K562 (cell line): ENCODE measurements at regions of chr3 and their contacts with region 1.

Region 1: DNA sequence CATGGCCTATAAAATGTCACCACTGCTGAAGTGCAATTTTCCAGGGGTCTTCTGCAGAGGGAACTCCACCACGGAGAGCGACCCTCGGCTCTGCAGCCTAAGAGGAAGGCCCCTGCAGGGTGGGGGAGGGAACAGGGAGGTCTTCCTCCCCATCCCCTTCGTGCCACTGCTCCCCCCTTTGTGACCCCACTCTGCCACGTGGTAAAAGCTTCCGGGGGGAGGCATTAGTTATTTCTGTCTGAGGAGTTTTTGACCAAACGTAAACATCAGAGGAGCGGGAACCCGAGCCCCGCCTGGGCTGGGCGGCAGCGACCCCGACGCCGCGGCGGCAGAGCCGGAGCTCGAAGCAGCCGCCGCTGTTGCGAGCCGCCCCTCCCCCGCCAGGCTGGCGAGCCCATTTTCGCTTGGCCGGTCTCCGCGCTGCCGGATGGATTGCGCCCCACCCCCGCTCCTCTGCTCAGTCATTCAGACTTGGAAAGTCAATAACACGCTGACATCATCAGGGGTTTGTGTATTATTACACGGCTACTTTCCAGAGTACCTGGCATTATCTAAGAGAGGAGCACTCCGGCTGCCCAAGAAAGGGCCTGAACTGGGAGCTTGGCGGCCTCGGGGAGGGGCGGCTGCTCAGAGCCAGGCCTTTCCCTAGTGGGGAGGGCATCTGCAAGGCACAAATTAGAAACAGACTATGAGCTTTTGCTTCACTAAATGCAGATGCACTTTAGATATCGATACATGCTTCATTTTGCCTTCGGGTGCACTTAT is 162.5 kb upstream of the TBL1XR1 start:
- DNase-seq: peak; percentile 88 to 98 (median 90)
- ATAC-seq: peak; percentile 80
- H3K4me3 ChIP-seq: peak overlapping the region; percentile 7; the same call in 1 of the 2 replicates
- H3K27ac ChIP-seq: peak overlapping the region; percentile 98
- H3K4me1 ChIP-seq: peaks cover 32 to 56% of the 10 kb centered on the region in 2 experiments
- H3K27me3 ChIP-seq: no peaks in the 10 kb centered on the region
- CTCF ChIP-seq: peak in 2 of 3 experiments; percentile 10 to 35; a peak in 2 of 6 replicates
- EP300 ChIP-seq: peak; percentile 98
- POLR2A ChIP-seq: no peak
- RAD21 ChIP-seq: peak; percentile 80 to 83

Region 2: DNA sequence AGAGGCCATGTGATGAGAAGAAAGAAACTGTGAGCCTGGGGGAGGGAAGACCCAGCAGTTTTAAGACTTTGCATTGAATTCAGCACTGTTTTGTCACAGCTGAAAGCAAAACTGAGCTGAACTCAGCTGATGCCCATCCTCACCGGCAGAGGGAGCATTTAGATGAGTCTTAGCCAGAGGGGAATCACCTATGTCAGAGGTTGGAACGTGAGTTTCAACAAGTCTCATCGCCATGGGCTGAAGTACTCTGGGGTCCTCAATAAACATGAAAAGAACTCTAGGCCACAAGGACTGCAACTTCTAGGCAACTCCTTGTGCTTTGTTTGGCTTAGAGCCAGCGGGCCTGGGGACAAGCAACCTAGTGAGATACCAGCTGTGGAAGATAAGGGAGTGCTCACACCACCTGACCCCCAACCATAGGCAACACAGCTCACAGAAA is 487.0 kb before region 1 on chr3:
- CTCF ChIA-PET with region 1: no interaction called
- POLR2A ChIA-PET with region 1: interaction called, 3 read pairs
- in situ Hi-C with region 1: no loop called
- intact Hi-C with region 1: loop called (anchors 10 kb)
- DNase-seq: peak; percentile 21 to 61 (median 30)
- ATAC-seq: peak; percentile 95
- H3K4me3 ChIP-seq: no peak overlapping the region
- H3K27ac ChIP-seq: no peak overlapping the region
- H3K4me1 ChIP-seq: peaks cover 3 to 5% of the 10 kb centered on the region in 2 experiments; a peak in 3 of 5 replicates
- H3K27me3 ChIP-seq: no peaks in the 10 kb centered on the region
- CTCF ChIP-seq: peak; percentile 65 to 72 (median 66)
- EP300 ChIP-seq: no peak
- POLR2A ChIP-seq: no peak
- RAD21 ChIP-seq: peak; percentile 29 to 75

Region 3: GRCh38 chr3:177057768-177058167 is 302.0 kb before region 1 on chr3:
- CTCF ChIA-PET with region 1: no interaction called
- POLR2A ChIA-PET with region 1: no interaction called
- in situ Hi-C with region 1: loop called (anchors 5 kb)
- intact Hi-C with region 1: loop called (anchors 5 kb)
- DNase-seq: no peak
- ATAC-seq: no peak
- H3K4me3 ChIP-seq: no peak overlapping the region
- H3K27ac ChIP-seq: no peak overlapping the region
- H3K4me1 ChIP-seq: peaks cover 0 to 5% of the 10 kb centered on the region in 2 experiments; a peak in 4 of 5 replicates
- H3K27me3 ChIP-seq: no peaks in the 10 kb centered on the region
- CTCF ChIP-seq: no peak
- EP300 ChIP-seq: no peak
- POLR2A ChIP-seq: no peak
- RAD21 ChIP-seq: no peak

Region 4: DNA sequence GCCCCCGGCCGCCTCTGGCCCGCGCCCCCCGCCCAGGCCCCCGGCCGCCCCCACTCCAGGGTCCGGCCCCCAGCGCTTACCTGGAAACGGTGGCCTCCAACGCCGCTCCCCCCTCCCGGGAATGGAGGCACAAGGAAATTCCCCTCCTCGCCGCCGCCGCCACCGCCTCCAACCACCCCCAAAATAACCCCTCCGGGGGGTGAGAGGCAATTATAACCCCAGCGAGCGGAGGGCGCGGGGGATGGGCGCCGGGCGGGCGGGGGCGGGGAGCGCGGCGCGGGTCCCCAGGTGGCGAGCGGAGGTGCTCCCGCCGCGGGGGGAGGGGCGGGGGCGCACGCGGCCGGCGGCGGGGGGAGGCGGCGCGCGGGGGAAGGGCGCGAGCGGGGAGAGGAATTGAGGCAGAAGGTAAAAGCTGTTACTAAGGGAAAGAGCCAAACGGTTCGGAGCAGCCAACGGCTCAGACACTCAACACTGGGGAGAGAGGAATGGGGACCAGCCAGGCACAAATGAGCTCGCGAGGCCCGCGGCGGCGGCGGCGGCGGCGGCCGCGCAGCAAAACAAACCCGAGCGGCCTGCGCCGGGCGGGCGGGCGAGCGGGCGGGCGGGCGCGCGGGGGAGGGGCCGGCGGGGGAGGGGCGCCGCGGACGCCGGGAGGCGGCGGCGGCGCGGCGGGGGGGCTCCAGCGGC is 162.6 kb before region 1 on chr3 and contains the start of gene TBL1XR1:
- CTCF ChIA-PET with region 1: interaction called, 13 read pairs
- POLR2A ChIA-PET with region 1: interaction called, 97 read pairs
- in situ Hi-C with region 1: loop called (anchors 5 kb)
- intact Hi-C with region 1: loop called (anchors 1 kb)
- DNase-seq: peak; percentile 83 to 95 (median 86)
- ATAC-seq: peak; percentile 40
- H3K4me3 ChIP-seq: peak within 1 kb of the TSS; percentile 93
- H3K27ac ChIP-seq: peak within 1 kb of the TSS; percentile 100
- H3K4me1 ChIP-seq: peaks cover 4 to 23% of the 10 kb centered on the region in 2 experiments
- H3K27me3 ChIP-seq: no peaks in the 10 kb centered on the region
- CTCF ChIP-seq: no peak
- EP300 ChIP-seq: peak; percentile 77
- POLR2A ChIP-seq: no peak
- RAD21 ChIP-seq: 0 out of 4 replicates have a peak, but pooled peaks of 1 of the 2 experiments have one; percentile 4
- polyA plus RNA-seq, gene TBL1XR1: 19.6 to 90.2 TPM

Region 5: DNA sequence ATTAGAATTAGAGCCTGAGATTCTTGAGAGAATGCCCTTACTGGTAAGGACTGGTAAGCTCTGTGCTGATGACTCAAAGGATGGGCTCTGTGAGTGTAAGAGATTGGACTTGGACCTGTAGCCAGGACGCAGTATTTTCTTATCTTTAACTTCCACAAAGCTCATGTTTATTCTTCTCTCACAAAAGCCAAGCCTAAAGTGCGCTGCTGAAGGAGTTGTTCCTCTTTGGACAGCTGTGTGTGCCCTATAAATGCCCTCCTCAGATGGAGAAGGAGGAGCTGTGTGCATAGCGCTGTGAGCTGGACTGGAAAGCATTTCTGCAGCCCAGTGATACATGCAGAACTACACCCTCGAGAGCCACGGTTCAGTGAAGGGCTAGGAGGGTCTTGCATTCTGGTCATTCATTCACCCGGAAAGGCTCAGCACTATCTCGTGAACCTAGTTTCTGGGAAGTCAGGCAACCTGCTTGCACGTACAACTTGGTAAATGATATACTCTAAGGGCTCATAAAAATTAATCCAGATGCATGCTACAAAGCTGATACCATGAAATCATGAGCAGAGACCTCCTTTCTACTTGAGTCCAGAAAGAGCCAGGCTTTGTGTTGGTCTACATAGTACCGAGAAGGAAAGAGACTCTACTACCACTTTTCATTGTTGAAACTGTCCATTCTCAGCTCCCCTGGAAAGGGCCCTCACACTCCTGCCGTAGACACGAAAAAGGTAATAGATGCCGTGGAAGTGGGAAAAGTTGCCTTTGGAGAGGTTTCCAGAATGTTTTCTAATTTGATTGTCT is 59.5 kb before region 1 on chr3:
- CTCF ChIA-PET with region 1: no interaction called
- POLR2A ChIA-PET with region 1: interaction called, 3 read pairs
- in situ Hi-C with region 1: no loop called
- intact Hi-C with region 1: loop called (anchors 1 kb)
- DNase-seq: peak in 3 of 4 experiments; percentile 23 to 77 (median 65)
- ATAC-seq: peak; percentile 85
- H3K4me3 ChIP-seq: no peak overlapping the region
- H3K27ac ChIP-seq: peak overlapping the region; percentile 58
- H3K4me1 ChIP-seq: peaks cover 4 to 10% of the 10 kb centered on the region in 2 experiments; a peak in 3 of 5 replicates
- H3K27me3 ChIP-seq: no peaks in the 10 kb centered on the region
- CTCF ChIP-seq: no peak
- EP300 ChIP-seq: peak; percentile 56; the same call in 1 of the 2 replicates
- POLR2A ChIP-seq: no peak
- RAD21 ChIP-seq: peak in 1 of 2 experiments; percentile 14; a peak in 1 of 4 replicates

Region 6: GRCh38 chr3:177345049-177345972 is 14.5 kb before region 1 on chr3:
- CTCF ChIA-PET with region 1: no interaction called
- POLR2A ChIA-PET with region 1: interaction called, 19 read pairs
- in situ Hi-C with region 1: no loop called
- intact Hi-C with region 1: loop called (anchors 1 kb)
- DNase-seq: peak; percentile 87 to 96 (median 88)
- ATAC-seq: peak; percentile 90
- H3K4me3 ChIP-seq: no peak overlapping the region
- H3K27ac ChIP-seq: peak overlapping the region; percentile 96
- H3K4me1 ChIP-seq: peaks cover 7 to 53% of the 10 kb centered on the region in 2 experiments; a peak in 4 of 5 replicates
- H3K27me3 ChIP-seq: no peaks in the 10 kb centered on the region
- CTCF ChIP-seq: no peak
- EP300 ChIP-seq: peak; percentile 96
- POLR2A ChIP-seq: peak; percentile 78
- RAD21 ChIP-seq: peak; percentile 27 to 57; a peak in 3 of 4 replicates

Region 7: DNA sequence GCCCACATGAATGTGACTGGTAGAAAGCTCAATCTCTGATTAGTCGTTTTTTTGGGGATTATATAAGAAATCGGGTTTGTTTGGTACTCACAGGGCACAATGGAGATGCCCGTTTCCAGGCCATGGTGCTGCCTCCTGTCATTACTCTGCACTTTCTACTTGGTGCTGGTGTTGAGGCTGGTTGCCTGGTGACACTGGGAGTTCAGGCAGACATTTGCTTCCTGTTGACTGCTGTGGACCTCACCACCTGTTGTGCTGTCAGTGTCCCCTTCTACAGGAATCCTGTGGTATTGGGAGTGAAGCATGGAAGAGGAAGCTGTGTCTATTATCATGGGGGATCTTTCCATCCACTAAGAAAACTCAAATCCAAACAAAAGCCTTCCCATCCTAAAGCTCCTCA is 64.7 kb after region 1 on chr3:
- CTCF ChIA-PET with region 1: no interaction called
- POLR2A ChIA-PET with region 1: no interaction called
- in situ Hi-C with region 1: no loop called
- intact Hi-C with region 1: no loop called
- DNase-seq: no peak
- ATAC-seq: no peak
- H3K4me3 ChIP-seq: no peak overlapping the region
- H3K27ac ChIP-seq: no peak overlapping the region
- H3K4me1 ChIP-seq: peaks cover 0 to 13% of the 10 kb centered on the region in 2 experiments; a peak in 3 of 5 replicates
- H3K27me3 ChIP-seq: no peaks in the 10 kb centered on the region
- CTCF ChIP-seq: no peak
- EP300 ChIP-seq: no peak
- POLR2A ChIP-seq: no peak
- RAD21 ChIP-seq: no peak

Region 8: GRCh38 chr3:177483182-177483967 is 123.6 kb after region 1 on chr3:
- CTCF ChIA-PET with region 1: no interaction called
- POLR2A ChIA-PET with region 1: no interaction called
- in situ Hi-C with region 1: no loop called
- intact Hi-C with region 1: loop called (anchors 1 kb)
- DNase-seq: peak; percentile 50 to 86 (median 66)
- ATAC-seq: peak; percentile 100
- H3K4me3 ChIP-seq: no peak overlapping the region
- H3K27ac ChIP-seq: peak overlapping the region; percentile 36; the same call in 1 of the 3 replicates
- H3K4me1 ChIP-seq: peaks cover 6 to 13% of the 10 kb centered on the region in 2 experiments; a peak in 4 of 5 replicates
- H3K27me3 ChIP-seq: no peaks in the 10 kb centered on the region
- CTCF ChIP-seq: peak; percentile 57 to 67 (median 62)
- EP300 ChIP-seq: peak; percentile 93
- POLR2A ChIP-seq: no peak
- RAD21 ChIP-seq: peak; percentile 63 to 77